Tibial artery (tissue), 4 donors: ENCODE measurements at regions of chr15 and their contacts with region 1.

Region 1: GRCh38 chr15:23823508-23823907 is 136.4 kb upstream of the NDN start:
- DNase-seq: no peak
- H3K4me3 ChIP-seq: no peak overlapping the region
- H3K27ac ChIP-seq: no peak overlapping the region
- H3K4me1 ChIP-seq: no peaks in the 10 kb centered on the region
- H3K27me3 ChIP-seq: no peaks in the 10 kb centered on the region
- CTCF ChIP-seq: no peak

Region 2: GRCh38 chr15:23881291-23881690 is 57.8 kb after region 1 on chr15:
- intact Hi-C with region 1: loop called (anchors 10 kb)
- DNase-seq: no peak
- H3K4me3 ChIP-seq: no peak overlapping the region
- H3K27ac ChIP-seq: no peak overlapping the region
- H3K4me1 ChIP-seq: no peaks in the 10 kb centered on the region
- H3K27me3 ChIP-seq: no peaks in the 10 kb centered on the region
- CTCF ChIP-seq: no peak